Mammary epithelial cell (primary cell): ENCODE measurements at regions of chr14 and their contacts with region 1.

Region 1: DNA sequence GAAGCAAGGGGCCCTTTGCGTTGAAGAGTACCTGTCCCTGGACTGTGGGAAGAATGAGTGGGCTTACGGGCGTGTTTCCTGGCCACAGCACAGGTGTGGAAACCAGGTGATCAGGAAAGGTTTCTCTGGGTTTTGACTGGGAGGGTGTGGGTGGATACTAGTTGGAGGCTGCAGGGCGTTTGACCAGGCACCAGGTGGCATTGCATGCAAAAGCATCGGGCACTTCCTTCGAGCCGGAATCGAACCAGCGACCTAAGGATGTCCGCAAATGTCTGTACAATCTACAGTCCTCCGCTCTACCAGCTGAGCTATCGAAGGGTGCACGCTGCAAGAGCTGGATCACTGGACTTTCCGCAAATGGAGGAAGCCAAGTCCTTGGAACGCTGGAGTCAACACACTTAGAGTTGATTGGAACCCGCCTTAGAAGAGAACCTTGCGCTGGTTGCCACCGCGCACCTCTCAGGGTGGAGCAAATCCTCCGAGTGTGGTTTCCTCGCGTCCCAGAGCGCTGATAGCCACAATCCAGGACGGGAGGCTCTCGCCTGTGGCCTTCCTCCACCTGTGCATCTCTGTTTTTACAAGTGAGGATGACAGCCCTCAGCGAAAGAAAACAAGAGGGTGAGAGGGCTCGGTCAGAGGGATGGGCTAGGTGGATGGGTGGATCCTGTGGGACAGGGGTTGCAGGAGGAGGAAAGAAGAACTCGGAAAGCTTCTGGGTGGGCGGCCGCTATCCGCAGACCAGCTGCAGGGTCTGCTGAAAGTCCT is 21.2 kb upstream of the RNASE4 start:
- DNase-seq: peak; percentile 89
- H3K4me3 ChIP-seq: peak overlapping the region; percentile 20 to 44 (median 43)
- H3K27ac ChIP-seq: no peak overlapping the region
- H3K4me1 ChIP-seq: no peaks in the 10 kb centered on the region
- H3K27me3 ChIP-seq: no peaks in the 10 kb centered on the region
- CTCF ChIP-seq: peak; percentile 41 to 78

Region 2: DNA sequence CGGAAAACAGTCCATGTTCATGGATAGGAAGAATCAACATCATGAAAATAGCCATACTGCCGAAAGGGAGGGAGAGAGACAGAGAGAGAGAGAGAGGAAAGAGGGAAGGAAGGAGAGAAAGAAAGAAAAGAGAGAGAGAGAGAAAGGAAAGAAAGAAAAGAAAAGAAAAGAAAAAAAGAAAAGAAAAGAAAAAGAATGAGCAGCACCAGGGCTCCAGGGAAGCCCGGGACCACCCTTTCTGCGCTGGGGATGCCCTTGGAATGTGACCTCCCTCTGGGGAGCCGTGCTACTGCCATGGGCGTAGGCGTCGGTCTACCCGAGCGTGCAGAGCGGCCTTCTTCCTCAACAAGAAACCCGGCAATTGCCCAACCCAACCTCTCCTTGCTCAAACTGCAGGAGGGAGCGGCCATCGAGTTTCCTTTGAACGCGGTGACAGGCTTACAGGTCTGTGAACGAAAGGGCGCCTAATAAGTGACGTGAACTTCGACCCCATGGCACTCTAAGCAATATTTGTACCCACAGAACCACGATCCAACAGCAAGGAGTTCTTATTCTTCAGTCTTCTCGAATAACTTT is 38.6 kb before region 1 on chr14:
- CTCF ChIA-PET with region 1: no interaction called
- dilution Hi-C with region 1: no loop called
- in situ Hi-C with region 1: no loop called
- intact Hi-C with region 1: loop called (anchors 2 kb)
- DNase-seq: peak; percentile 60
- H3K4me3 ChIP-seq: peak overlapping the region; percentile 31 to 60 (median 57)
- H3K27ac ChIP-seq: peak overlapping the region; percentile 35
- H3K4me1 ChIP-seq: peaks cover 11% of the 10 kb centered on the region
- H3K27me3 ChIP-seq: no peaks in the 10 kb centered on the region
- CTCF ChIP-seq: no peak

Region 3: DNA sequence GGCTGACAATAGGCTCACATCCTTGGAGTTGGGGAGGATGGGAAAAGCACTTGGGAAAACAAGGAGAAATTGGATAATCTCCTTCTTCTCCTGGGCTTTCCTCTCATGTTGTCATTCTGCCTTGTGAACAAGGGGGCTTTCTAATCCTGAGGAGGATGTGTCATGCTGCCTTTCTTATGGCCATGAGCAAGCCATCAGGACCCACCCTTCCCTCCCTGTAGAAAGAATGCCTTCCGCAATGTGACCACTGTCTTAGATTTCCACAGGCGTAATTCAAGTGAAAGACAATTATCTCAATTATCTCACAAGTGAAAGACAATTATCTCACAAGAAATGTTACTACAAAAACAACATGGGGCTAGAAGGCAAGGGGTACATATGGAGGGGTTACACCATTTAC is 18.6 kb before region 1 on chr14:
- CTCF ChIA-PET with region 1: no interaction called
- dilution Hi-C with region 1: no loop called
- in situ Hi-C with region 1: no loop called
- intact Hi-C with region 1: no loop called
- DNase-seq: no peak
- H3K4me3 ChIP-seq: no peak overlapping the region
- H3K27ac ChIP-seq: no peak overlapping the region
- H3K4me1 ChIP-seq: no peaks in the 10 kb centered on the region
- H3K27me3 ChIP-seq: no peaks in the 10 kb centered on the region
- CTCF ChIP-seq: no peak

Region 4: GRCh38 chr14:20714593-20715250 is 51.6 kb after region 1 on chr14:
- CTCF ChIA-PET with region 1: no interaction called
- dilution Hi-C with region 1: no loop called
- in situ Hi-C with region 1: no loop called
- intact Hi-C with region 1: no loop called
- DNase-seq: peak; percentile 79
- H3K4me3 ChIP-seq: no peak overlapping the region
- H3K27ac ChIP-seq: no peak overlapping the region
- H3K4me1 ChIP-seq: no peaks in the 10 kb centered on the region
- H3K27me3 ChIP-seq: no peaks in the 10 kb centered on the region
- CTCF ChIP-seq: no peak